ENCODE measurements at regions of chr12 and their contacts with region 1.

Region 1: GRCh38 chr12:4320853-4321701 is at the start of gene TIGAR:
- DNase-seq: peak; percentile 96

Region 2: DNA sequence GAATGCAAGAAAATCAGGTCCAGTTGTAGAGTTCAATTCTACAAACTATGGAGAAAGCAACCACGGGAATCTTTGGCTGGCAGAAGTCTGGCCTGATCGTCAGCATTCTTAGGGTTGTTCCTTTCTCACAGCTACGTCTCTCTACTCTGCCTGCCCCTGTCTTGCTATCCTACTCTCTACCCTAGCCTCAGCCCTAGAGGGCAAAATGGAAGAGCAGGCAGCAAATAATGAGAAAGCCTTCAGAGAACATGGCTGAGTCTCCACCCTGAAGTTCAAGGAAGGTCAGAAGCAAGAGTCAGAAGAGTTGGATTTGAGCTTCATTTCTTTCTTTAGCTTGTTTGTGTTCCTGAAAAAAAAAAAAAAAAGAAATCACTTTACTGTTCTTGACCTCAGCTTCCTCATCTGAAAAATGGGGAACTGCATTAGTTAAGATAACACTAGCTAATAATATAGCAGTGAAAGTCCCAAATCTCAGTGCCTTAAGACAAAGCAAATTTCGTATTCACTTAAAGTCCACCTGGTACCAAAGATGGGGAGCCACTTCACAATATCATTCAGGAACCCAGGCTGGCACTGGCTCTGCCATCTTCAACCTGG is 97.7 kb before region 1 on chr12:
- in situ Hi-C with region 1: no loop called
- DNase-seq: no peak

Region 3: GRCh38 chr12:4743046-4743445 is 422.0 kb after region 1 on chr12:
- in situ Hi-C with region 1: no loop called
- DNase-seq: no peak

Region 4: DNA sequence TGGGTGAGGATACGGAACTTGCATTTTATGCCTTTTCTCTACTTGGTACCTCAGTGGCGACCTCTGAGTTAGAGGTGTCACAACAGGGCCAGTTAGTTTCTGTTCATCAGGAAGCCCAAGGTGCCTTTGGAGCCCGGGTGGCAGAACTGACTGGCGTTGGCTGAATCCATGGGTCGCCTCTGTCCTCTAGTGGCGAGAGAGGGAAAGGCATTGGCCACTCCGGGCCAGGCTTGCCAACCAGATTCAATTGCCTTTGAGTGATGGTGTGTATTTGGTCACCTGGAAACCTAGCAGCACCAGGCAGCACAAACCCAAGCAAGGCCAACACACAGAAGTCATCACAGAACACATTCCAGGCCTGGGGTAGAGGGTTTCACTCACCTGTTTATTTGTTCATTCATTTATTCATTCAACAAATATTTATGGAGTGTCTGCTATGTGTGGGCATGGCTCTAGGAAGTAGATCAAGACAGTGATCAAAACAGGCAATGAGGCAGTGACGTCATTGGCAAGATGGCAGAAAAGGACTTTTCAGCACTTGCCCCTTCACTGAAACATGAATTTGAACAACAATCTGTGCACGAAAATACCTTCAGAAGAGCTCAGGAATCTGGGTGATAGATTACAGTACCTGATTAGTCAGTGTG is 682.1 kb after region 1 on chr12:
- in situ Hi-C with region 1: loop called (anchors 25 kb)
- DNase-seq: peak; percentile 52

Measured in KBM-7 (cell line).